ENCODE measurements at regions of chr5 and their contacts with region 1.

Region 1: DNA sequence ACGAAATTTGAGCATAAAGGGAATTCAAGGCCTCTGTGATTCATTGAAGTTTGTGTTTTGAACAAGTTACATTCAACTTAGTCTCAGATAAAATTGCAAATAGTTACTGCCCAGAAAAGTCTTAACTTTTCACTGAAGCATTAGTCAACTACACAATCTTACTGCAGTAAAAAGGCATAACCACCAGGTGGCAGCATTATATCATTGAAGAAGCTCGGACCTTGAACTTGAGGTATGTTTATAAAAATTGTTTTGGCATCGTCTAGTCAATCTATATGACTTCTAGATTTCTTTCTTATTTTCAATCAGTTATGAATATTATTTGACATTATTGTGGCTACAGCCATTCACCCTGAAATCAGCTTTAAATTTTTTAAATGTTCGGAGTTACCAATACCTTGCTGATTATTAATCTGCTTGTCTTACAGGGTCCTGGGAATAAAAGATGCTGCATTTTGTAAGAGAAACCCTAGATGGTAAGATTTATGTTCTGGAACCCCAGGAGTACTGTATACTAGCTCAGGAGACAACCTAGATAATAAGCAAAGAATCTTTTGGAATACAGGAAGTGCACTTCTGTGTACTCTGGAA is 83.9 kb upstream of the GRAMD2B start:
- DNase-seq: peak; percentile 55
- ATAC-seq: no peak
- H3K4me3 Mint-ChIP-seq: no peak overlapping the region
- H3K27ac Mint-ChIP-seq: no peak overlapping the region
- H3K4me1 Mint-ChIP-seq: no peaks in the 10 kb centered on the region
- H3K27me3 Mint-ChIP-seq: no peaks in the 10 kb centered on the region
- CTCF ChIP-seq: peak; percentile 90

Region 2: DNA sequence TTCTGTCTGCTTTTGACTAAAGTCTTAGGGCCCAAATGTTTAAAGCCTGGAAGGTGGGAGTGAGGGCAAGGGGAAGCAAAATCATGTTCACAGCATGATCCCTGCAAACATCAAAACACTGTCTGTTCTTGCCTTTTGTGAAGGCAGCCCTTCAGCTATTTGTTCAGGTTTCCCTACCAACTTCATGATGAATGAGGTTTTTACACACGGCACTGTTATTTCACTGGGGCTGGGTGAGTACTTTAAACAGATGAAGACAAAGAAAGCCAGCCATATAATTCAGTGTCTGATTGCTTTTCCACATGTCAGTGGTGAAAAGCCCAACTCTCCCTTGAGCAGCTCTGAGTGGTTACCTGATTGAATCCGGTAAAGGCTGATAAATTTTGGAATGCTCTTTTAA is 140.8 kb before region 1 on chr5:
- CTCF ChIA-PET with region 1: no interaction called
- POLR2A ChIA-PET with region 1: no interaction called
- intact Hi-C with region 1: no loop called
- DNase-seq: no peak
- ATAC-seq: no peak
- H3K4me3 Mint-ChIP-seq: no peak overlapping the region
- H3K27ac Mint-ChIP-seq: no peak overlapping the region
- H3K4me1 Mint-ChIP-seq: no peaks in the 10 kb centered on the region
- H3K27me3 Mint-ChIP-seq: no peaks in the 10 kb centered on the region
- CTCF ChIP-seq: no peak

Region 3: DNA sequence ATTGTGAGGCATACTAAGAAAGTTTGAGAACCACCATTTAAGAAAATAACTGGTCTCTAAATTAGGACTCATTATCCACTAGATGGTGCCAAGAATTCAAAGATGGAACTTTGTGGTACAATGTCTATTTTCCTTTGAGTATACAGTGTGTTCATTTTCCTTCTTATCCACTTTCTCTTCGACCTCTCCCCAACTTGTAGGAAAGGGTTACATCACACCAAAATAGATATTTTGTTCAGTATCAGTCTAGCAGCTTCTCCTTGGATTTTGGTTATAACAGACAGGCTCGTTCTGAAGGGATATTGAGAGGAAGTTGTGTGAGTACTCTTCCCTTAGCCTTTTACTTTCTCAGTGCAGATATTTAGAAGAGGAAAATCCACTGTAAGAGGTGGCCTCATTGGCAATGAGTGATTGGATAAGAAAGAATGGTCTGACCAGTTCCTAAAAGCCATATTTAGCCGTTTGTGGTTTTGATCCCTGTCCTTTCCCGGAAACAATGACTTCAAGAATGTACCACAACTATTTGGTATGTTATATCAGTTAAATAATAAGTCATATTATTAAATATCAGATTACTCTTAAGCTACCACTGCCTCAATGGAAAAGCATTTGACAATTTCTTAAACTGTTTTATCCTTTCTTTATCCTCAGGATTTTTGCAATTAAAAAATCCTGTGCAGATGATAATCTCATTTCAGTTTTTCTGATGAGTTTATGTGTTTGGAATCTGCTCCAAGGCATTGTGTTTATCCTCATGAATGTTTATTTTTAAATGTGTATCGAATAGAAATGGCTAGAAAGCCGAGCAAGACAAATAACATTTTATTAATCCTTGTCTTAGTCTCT is 14.9 kb after region 1 on chr5:
- CTCF ChIA-PET with region 1: interaction called, 44 read pairs
- POLR2A ChIA-PET with region 1: no interaction called
- intact Hi-C with region 1: no loop called
- DNase-seq: no peak
- ATAC-seq: peak; percentile 75
- H3K4me3 Mint-ChIP-seq: peak overlapping the region; percentile 57
- H3K27ac Mint-ChIP-seq: peak overlapping the region; percentile 47
- H3K4me1 Mint-ChIP-seq: peaks cover 14% of the 10 kb centered on the region
- H3K27me3 Mint-ChIP-seq: no peaks in the 10 kb centered on the region
- CTCF ChIP-seq: peak; percentile 69

Region 4: DNA sequence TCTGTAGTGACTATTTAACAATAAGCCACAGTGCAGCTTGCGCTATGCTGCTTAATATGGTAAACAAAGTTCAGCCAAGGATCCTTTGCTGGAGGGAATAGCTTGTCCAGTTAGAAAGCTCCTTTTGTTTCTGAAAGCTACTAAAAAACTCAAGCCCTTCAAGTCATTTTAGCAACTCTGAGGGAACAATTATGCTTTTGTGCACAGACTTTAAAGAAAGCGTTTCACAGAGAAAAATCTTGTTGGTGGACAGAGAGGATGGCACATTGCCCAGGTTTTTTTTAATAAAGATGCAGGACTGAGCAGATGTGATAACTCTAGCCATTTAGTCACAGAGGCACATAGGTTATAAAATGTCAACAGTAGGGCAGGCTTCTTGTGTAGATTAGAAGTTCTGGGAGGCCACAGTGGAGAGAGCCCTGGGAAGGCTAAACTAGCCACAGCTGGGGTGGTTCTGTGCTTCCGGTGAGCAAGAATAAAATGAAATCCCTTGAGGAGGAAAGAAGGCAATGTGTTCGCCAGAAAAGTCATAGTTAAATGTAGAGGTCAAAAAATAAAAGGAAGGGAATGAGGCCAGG is 192.3 kb after region 1 on chr5:
- CTCF ChIA-PET with region 1: interaction called, 57 read pairs
- POLR2A ChIA-PET with region 1: interaction called, 6 read pairs
- intact Hi-C with region 1: no loop called
- DNase-seq: no peak
- ATAC-seq: no peak
- H3K4me3 Mint-ChIP-seq: no peak overlapping the region
- H3K27ac Mint-ChIP-seq: no peak overlapping the region
- H3K4me1 Mint-ChIP-seq: no peaks in the 10 kb centered on the region
- H3K27me3 Mint-ChIP-seq: no peaks in the 10 kb centered on the region
- CTCF ChIP-seq: no peak

Region 5: DNA sequence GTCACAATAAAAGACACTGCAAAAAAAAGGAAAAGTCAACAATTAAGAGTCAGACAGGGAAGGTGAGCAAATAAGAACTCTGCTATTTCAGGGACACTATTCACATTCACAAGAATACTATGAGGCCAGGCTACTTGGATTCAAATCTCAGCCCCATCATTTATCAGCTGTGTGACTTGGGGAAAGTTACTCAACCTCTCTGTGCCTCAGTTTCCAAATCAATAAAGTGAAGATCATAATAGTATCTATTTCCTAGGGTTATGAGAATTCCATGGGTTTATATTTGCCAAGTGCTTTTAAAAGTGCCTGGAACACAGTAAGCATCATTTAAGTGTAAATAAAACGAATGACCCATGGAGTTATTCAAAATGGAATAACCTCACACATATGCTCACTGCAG is 199.3 kb after region 1 on chr5:
- CTCF ChIA-PET with region 1: interaction called, 62 read pairs
- POLR2A ChIA-PET with region 1: interaction called, 6 read pairs
- intact Hi-C with region 1: loop called (anchors 1 kb)
- DNase-seq: no peak
- ATAC-seq: no peak
- H3K4me3 Mint-ChIP-seq: no peak overlapping the region
- H3K27ac Mint-ChIP-seq: no peak overlapping the region
- H3K4me1 Mint-ChIP-seq: no peaks in the 10 kb centered on the region
- H3K27me3 Mint-ChIP-seq: no peaks in the 10 kb centered on the region
- CTCF ChIP-seq: no peak

Region 6: GRCh38 chr5:126544087-126544740 is 204.9 kb after region 1 on chr5:
- CTCF ChIA-PET with region 1: interaction called, 62 read pairs
- POLR2A ChIA-PET with region 1: no interaction called
- intact Hi-C with region 1: loop called (anchors 1 kb)
- DNase-seq: peak; percentile 53
- ATAC-seq: peak; percentile 53
- H3K4me3 Mint-ChIP-seq: no peak overlapping the region
- H3K27ac Mint-ChIP-seq: no peak overlapping the region
- H3K4me1 Mint-ChIP-seq: no peaks in the 10 kb centered on the region
- H3K27me3 Mint-ChIP-seq: no peaks in the 10 kb centered on the region
- CTCF ChIP-seq: peak; percentile 49

Region 7: GRCh38 chr5:127092690-127093089 is 753.4 kb after region 1 on chr5:
- CTCF ChIA-PET with region 1: no interaction called
- POLR2A ChIA-PET with region 1: no interaction called
- intact Hi-C with region 1: no loop called
- DNase-seq: no peak
- ATAC-seq: no peak
- H3K4me3 Mint-ChIP-seq: no peak overlapping the region
- H3K27ac Mint-ChIP-seq: no peak overlapping the region
- H3K4me1 Mint-ChIP-seq: peaks cover 10% of the 10 kb centered on the region
- H3K27me3 Mint-ChIP-seq: no peaks in the 10 kb centered on the region
- CTCF ChIP-seq: no peak